Prostate gland (tissue), 2 donors: ENCODE measurements at regions of chr6 and their contacts with region 1.

Region 1: GRCh38 chr6:28335564-28336283 is at the start of gene ZSCAN31:
- DNase-seq: peak; percentile 93
- H3K4me3 ChIP-seq: peak within 1 kb of the TSS; percentile 56 to 60
- H3K27ac ChIP-seq: peak within 1 kb of the TSS; percentile 97 to 99
- H3K4me1 ChIP-seq: no peaks in the 10 kb centered on the region
- H3K27me3 ChIP-seq: no peaks in the 10 kb centered on the region
- CTCF ChIP-seq: no peak
- POLR2A ChIP-seq: peak; percentile 52
- total RNA-seq, gene ZSCAN31: 13.7 to 21.7 TPM

Region 2: DNA sequence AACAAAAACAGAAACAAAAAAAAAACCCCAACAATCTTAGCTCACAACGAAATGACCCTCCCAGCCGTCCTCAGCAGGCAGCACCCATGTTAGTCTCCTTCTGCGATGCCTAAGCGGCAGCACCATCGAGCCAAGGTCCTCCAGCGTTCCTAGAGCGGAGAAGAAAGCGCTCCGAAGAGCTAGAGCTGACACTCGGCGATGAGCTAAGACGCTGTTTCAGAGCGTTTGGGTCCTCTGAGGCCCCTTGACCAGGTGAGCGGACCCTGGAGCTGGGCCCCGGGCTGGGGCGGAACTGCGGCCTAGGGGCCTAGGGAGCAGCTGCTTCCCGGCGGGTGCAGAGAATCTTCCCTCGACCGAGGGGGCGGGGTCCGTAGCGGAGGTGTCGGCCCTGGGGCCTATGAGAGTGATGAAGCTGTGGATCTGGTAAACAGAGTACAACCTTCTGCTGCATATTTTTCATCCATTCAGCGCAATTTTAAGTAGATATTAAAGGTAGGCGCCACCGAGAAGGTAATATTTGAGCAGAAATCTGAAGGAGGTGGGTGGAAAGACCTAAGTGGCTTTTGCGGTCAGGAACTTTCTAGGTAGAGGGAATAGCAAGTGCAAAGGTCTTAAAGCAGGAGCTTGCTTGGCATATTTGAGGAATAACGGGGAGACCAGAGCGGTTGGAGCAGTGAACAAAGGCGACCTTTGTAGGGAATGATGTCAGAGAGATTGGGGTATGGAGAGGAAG is 68.6 kb before region 1 on chr6 and contains the start of gene ZSCAN26:
- intact Hi-C with region 1: loop called (anchors 5 kb)
- DNase-seq: peak; percentile 65
- H3K4me3 ChIP-seq: peak within 1 kb of the TSS; percentile 53 to 54
- H3K27ac ChIP-seq: peak within 1 kb of the TSS; percentile 73 to 80
- H3K4me1 ChIP-seq: no peaks in the 10 kb centered on the region
- H3K27me3 ChIP-seq: no peaks in the 10 kb centered on the region
- CTCF ChIP-seq: no peak
- POLR2A ChIP-seq: peak; percentile 31
- total RNA-seq, gene ZSCAN26: 25.0 to 30.7 TPM